ENCODE measurements at regions of chr20 and their contacts with region 1.

Region 1: DNA sequence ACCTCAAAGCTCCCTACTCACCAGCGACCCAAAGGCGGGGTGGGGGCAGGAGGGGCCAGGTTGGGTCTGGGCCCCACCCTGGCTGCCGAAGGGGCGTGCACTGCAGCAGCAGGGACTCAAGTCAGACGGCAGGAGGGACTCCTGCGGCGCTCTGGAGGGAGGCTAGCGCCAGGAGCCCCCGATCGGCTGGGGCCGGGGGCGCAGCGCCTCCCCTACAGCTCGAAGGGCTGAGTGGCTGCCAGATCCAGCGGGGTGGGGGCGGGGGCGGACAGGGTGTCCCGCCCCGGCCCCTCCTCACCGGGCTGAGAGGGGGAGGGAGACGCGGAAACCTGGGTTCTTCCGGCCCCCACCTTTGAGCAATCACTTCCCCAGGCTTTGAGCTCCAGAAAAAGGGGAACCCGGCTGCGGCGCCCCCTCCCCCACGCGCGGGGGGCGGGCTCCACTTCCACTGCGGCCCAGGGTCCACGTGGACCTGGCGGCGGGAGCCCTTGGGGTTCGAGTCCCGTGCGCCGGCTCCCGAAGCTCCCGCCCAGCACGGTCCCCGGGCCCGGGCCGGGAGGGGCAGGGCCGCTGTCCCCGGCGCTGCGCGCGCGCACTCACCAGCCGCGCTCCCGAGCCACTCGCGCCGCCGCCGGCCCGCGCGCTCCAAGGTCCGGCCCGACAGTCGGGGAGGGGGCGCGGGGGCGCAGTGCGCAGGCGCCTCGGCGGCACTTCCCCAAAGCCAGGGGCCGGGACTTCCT is at the start of gene RGS19:
- DNase-seq: peak; percentile 85
- ATAC-seq: peak; percentile 52
- H3K4me3 Mint-ChIP-seq: peak within 1 kb of the TSS; percentile 87
- H3K27ac Mint-ChIP-seq: peak within 1 kb of the TSS; percentile 88
- H3K4me1 Mint-ChIP-seq: peaks cover 40% of the 10 kb centered on the region
- H3K27me3 Mint-ChIP-seq: peaks cover 12% of the 10 kb centered on the region
- total RNA-seq, gene RGS19: 84.5 to 119 TPM

Region 2: GRCh38 chr20:64101731-64102621 is 22.5 kb after region 1 on chr20:
- CTCF ChIA-PET with region 1: interaction called, 16 read pairs
- DNase-seq: peak; percentile 67
- ATAC-seq: peak; percentile 85
- H3K4me3 Mint-ChIP-seq: no peak overlapping the region
- H3K27ac Mint-ChIP-seq: no peak overlapping the region
- H3K4me1 Mint-ChIP-seq: peaks cover 9% of the 10 kb centered on the region
- H3K27me3 Mint-ChIP-seq: peaks cover 23% of the 10 kb centered on the region

Region 3: GRCh38 chr20:64119681-64120341 is 40.4 kb after region 1 on chr20:
- CTCF ChIA-PET with region 1: interaction called, 110 read pairs
- DNase-seq: no peak
- ATAC-seq: peak; percentile 14
- H3K4me3 Mint-ChIP-seq: peak overlapping the region; percentile 5
- H3K27ac Mint-ChIP-seq: peak overlapping the region; percentile 42
- H3K4me1 Mint-ChIP-seq: peaks cover 10% of the 10 kb centered on the region
- H3K27me3 Mint-ChIP-seq: peaks cover 28% of the 10 kb centered on the region